ENCODE measurements at regions of chr2 and their contacts with region 1.

Region 1: GRCh38 chr2:149561309-149561926 is 26.2 kb downstream of the MMADHC start:
- ATAC-seq: peak in 1 of 8 experiments; percentile 28
- H3K4me3 ChIP-seq: no peak overlapping the region
- H3K27ac ChIP-seq: no peak overlapping the region
- H3K4me1 ChIP-seq: no peaks in the 10 kb centered on the region

Region 2: DNA sequence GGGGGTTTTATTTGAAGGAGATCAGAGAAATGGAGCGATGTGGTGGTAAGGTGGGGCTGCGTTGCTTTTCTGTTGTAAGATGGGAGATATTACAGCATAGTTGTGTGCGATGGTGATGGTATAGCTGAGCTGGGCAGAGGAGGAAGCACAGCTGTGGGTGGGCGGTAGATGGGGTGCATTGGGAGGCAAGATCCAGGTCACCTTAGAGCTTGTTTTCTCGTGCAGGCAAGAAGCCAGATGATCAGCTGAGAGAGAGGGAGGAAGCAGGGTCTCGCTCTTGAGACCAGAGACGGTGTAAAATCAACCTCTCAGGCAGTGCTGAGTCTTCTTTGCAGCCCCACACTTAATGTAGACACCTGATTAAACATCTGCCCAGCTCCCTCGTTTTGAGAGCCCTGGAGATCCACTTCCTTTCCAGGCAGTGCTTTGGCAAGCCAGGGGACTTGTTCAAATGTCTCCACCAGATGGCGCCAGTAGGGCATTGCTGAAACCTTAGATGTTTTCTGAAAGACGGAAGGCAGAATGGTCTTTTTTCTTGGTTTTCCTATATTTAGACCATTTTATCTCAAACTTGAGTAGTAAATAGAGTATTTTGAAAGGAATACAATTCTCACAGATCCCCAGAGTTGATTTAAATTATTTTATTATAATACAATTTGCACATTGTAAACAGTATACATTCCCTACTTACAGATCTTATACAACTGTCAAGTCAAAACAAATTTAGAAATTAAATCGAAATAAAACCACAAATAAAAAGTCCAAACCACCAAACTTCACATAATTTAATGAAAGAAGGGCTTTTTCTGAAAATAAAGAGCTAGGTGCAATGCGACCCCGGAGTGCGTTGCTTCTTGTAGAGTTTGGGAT is 544.1 kb before region 1 on chr2:
- in situ Hi-C with region 1: loop called in 8 of 9 experiments (anchors 5 to 25 kb)
- ATAC-seq: peak; percentile 65 to 88 (median 74)
- H3K4me3 ChIP-seq: no peak overlapping the region
- H3K27ac ChIP-seq: no peak overlapping the region
- H3K4me1 ChIP-seq: no peaks in the 10 kb centered on the region

Region 3: DNA sequence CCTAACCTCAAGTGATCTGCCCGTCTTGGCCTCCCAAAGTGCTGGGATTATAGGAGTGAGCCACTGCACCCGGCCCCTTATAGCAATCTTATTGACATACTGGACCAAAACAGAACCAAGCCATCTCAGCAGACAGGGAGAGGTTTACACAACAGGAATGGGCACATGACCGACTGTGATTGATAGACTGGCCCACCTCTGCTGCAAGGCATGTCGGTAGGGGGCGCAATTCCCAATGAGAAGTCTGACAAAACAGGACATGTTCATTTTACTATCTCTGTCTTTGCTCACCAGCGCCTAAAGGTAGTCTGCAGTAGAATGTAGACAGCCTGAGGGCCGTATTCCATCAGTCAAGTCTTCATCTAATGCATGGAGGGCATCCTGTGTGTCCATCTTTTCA is 521.0 kb before region 1 on chr2:
- in situ Hi-C with region 1: loop called in 1 of 9 experiments (anchors 25 kb)
- ATAC-seq: peak in 2 of 8 experiments; percentile 32 to 34
- H3K4me3 ChIP-seq: no peak overlapping the region
- H3K27ac ChIP-seq: no peak overlapping the region
- H3K4me1 ChIP-seq: no peaks in the 10 kb centered on the region

Region 4: DNA sequence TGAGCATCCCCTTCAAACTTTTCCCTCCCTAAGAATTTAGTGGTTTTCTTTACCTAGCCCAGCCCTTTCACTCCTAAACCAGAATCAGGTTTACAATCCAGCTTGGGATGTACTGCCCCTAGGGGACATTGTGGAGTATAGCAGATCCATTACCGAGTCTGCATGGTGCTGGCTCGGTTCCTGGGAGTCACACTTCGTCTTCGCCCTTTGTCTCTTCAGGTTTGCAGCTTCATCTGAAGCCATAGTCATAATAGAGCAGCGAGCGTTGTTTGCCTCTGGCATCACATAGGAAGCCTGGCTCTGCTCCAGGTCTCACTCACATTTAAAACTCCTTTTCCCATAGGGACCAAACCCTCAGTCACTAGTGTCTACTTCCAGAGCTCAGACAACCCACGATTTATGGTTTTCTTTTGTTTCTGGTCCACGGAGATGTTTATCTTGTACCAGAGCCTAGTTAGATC is 247.9 kb before region 1 on chr2:
- in situ Hi-C with region 1: loop called in 1 of 9 experiments (anchors 25 kb)
- ATAC-seq: peak; percentile 67 to 98 (median 94)
- H3K4me3 ChIP-seq: no peak overlapping the region
- H3K27ac ChIP-seq: no peak overlapping the region
- H3K4me1 ChIP-seq: peaks cover 5 to 18% of the 10 kb centered on the region in 2 donors

Region 5: GRCh38 chr2:149330126-149331022 is 231.0 kb before region 1 on chr2 and contains the start of gene LYPD6:
- in situ Hi-C with region 1: loop called in 2 of 9 experiments (anchors 25 kb)
- ATAC-seq: peak; percentile 92 to 95 (median 93)
- H3K4me3 ChIP-seq: peak within 1 kb of the TSS; percentile 61 to 69 (median 62)
- H3K27ac ChIP-seq: no peak within 1 kb of the TSS
- H3K4me1 ChIP-seq: peaks cover 6 to 17% of the 10 kb centered on the region in 2 donors
- total RNA-seq, gene LYPD6: 0.41 to 4.6 (median 2.6) TPM

Region 6: DNA sequence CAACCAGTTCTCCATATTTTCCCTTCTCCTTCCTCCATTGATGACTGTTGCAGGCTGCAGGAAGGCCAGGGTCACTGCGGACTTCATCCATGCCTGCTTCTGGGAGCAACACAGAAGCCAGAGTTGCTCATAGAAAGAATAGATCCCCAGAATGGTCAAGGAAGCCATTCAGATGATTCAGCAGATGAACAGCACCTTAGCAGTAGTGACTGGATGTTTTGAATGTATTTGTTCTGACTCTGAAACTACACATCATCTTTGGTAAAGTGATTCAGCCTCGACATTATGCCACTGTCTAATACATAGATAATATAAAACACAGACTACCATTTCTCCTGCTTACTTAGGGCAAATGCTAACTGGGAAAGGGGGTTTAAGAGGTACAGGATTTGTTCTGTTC is 514.4 kb after region 1 on chr2:
- in situ Hi-C with region 1: no loop called
- ATAC-seq: peak in 3 of 8 experiments; percentile 6 to 11 (median 6)
- H3K4me3 ChIP-seq: no peak overlapping the region
- H3K27ac ChIP-seq: no peak overlapping the region
- H3K4me1 ChIP-seq: peaks cover 2 to 8% of the 10 kb centered on the region in 2 donors

Measured in motor neuron (in vitro differentiated cells).